ENCODE measurements at regions of chr3 and their contacts with region 1.

Region 1: DNA sequence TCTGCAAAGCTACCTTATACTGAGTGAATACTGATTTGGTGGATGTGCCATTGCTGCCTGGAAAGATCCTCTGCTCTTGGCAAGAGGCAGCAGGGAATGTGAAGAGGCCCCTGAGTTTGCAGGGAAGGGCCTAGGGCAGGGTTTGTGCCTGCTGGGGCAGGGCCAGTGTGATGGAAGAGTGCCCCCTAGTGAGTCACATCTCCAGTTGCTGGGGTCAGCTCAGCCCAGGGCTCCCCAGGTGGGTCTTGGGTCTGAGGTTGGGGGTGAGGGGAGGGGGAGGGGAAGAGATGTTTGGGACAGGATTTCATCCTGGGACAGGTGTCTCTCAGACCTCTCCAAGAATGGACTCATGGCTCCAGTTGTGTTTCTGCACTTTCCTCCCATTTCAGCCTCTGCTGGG is 4.1 kb upstream of the AMOTL2 start:
- DNase-seq: peak in 7 of 14 experiments; percentile 10 to 65 (median 49)
- ATAC-seq: no peak
- H3K4me3 ChIP-seq: no peak overlapping the region
- H3K4me3 Mint-ChIP-seq: no peak overlapping the region
- H3K27ac ChIP-seq: no peak overlapping the region
- H3K27ac Mint-ChIP-seq: no peak overlapping the region
- H3K4me1 ChIP-seq: peaks cover 15% of the 10 kb centered on the region
- H3K4me1 Mint-ChIP-seq: peaks cover 12% of the 10 kb centered on the region
- H3K27me3 ChIP-seq: peaks cover 18 to 23% of the 10 kb centered on the region in 2 experiments
- H3K27me3 Mint-ChIP-seq: peaks cover 43% of the 10 kb centered on the region
- CTCF ChIP-seq: no peak

Region 2: DNA sequence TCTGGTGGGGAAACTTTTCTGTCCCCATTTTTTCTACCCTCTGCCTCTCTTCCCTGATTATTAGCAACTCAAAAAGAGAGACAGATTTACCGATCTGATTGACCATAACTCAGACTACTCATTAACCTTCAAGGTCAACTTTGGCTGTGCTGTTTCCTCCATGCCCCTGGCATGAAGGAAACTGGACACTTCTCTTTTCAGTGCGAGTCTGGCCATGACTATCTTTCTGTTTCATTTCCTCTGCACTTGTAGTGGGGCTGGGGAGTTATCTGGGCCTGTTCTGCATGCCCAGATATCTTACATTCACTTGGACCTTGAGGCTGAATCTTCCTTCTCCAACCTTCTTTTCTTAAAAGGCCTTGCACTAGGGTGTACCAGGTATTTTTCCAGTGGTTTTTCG is 271.8 kb before region 1 on chr3:
- CTCF ChIA-PET with region 1: no interaction called
- POLR2A ChIA-PET with region 1: no interaction called
- intact Hi-C with region 1: no loop called
- DNase-seq: no peak
- ATAC-seq: no peak
- H3K4me3 ChIP-seq: no peak overlapping the region
- H3K4me3 Mint-ChIP-seq: no peak overlapping the region
- H3K27ac ChIP-seq: no peak overlapping the region
- H3K27ac Mint-ChIP-seq: no peak overlapping the region
- H3K4me1 ChIP-seq: no peaks in the 10 kb centered on the region
- H3K4me1 Mint-ChIP-seq: peaks cover 7% of the 10 kb centered on the region
- H3K27me3 ChIP-seq: peaks cover 5% of the 10 kb centered on the region in 2 experiments
- H3K27me3 Mint-ChIP-seq: no peaks in the 10 kb centered on the region
- CTCF ChIP-seq: no peak

Region 3: DNA sequence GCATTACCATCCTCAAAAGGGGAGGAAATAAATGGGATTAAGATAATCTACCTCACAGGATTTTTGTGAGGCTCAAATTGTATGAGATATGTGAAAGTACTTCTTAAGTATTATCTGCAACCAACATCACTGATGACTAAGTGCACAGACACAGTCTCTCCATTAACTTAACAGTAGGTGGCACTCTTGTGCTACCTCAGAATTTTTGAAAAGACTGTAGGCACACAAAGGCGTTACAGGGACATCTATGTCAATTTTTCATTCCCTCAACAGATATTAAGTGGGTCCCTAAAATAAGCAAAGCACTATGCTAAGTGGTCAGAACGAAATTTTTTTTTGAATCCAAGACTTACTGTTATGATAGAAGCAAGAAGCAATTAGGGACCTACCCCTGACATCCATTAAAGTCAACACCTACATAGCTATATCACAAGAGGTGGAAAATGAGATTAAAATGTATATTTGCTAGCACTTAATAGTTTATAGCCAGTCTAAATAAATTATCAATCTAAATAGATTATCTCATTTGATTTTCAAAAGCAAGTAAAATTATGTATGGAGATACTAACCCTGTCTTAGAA is 180.6 kb before region 1 on chr3:
- CTCF ChIA-PET with region 1: no interaction called
- POLR2A ChIA-PET with region 1: no interaction called
- intact Hi-C with region 1: loop called in 1 of 2 experiments (anchors 5 kb)
- DNase-seq: peak in 3 of 14 experiments; percentile 53 to 64 (median 63)
- ATAC-seq: peak; percentile 77
- H3K4me3 ChIP-seq: no peak overlapping the region
- H3K4me3 Mint-ChIP-seq: no peak overlapping the region
- H3K27ac ChIP-seq: no peak overlapping the region
- H3K27ac Mint-ChIP-seq: no peak overlapping the region
- H3K4me1 ChIP-seq: no peaks in the 10 kb centered on the region
- H3K4me1 Mint-ChIP-seq: peaks cover 6% of the 10 kb centered on the region
- H3K27me3 ChIP-seq: no peaks in the 10 kb centered on the region
- H3K27me3 Mint-ChIP-seq: no peaks in the 10 kb centered on the region
- CTCF ChIP-seq: peak; percentile 78

Measured in CD4-positive, alpha-beta T cell (primary cell).